H1 (cell line): ENCODE measurements at regions of chr19 and their contacts with region 1.

Region 1: DNA sequence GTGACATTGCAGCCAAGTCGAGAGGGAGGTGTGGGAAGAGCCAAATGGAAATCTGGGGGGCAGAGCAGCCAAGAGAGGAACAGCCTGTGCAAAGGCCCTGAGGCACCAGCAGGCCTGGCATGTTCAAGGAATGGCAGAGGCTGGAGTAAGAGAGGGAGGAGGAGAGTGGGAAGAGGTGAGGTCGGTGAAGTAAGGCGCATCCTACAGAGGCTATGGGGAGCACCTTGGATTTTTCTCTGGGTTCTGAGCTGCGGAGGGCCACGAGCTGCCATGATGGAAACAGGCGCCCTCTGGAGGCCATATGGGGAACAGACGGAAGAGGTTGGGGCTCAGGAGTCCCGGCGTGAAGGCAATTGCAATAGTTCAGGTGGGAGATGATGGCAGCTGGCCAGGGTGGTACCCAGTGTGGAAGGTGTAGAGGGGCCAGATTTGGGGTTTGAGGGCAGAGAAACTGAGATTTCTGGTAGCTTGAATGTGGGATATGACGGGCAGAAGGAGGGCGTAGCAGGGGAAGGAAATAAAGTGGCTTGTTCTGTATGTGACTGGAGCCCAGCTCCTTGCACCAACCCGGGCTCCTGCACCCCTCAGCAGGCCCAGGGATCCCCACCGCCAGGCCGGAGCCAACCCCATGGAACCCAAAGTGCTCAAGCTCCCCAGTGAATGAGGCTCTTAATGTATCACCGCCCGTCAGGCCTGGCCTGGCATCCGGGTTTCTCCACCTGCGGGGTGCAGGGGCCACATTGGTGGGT is 20.5 kb upstream of the STRN4 start:
- DNase-seq: peak in 1 of 2 experiments; percentile 84
- H3K4me3 ChIP-seq: no peak overlapping the region
- H3K27ac ChIP-seq: no peak overlapping the region
- H3K4me1 ChIP-seq: no peaks in the 10 kb centered on the region
- H3K27me3 ChIP-seq: no peaks in the 10 kb centered on the region
- CTCF ChIP-seq: peak; percentile 83 to 95 (median 91)
- EP300 ChIP-seq: peak in 1 of 2 experiments; percentile 24; a peak in 1 of 3 replicates
- POLR2A ChIP-seq: no peak
- RAD21 ChIP-seq: peak; percentile 51 to 67

Region 2: DNA sequence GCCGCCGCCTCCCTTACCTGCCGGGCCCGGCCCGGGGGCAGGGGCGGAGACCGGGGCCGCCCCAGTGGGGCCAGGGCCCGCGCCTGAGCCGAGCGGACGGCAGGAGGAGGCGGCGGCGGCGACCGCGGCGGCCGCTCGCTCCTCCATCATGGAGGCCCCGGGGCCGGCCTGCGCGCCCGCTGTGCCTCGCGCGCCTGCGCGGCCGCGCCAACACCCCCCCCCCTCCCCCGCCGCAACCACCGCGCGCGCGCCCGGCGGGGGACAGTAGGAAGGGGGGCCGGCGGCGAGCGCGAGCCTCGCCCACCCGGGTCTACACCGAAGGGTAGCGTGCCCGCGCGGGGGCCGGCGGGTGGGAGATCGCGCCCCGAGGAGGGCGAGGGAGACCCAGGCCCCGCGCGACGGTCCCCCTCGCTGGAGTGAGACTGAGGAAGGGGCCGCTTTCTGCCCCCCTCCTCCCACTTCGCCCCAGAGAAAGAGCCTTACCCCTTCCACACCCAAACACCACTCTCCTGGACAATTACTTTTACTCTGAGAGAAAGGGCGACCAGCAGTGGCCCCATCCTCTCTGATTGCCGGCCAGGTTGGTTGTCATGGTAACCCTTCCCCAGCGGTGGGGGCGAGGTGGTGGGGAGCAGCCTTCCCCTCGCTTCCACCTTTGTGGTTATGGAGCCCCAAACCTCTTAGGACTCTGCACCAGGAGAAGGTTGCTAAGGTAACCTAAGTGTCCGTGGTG is 20.3 kb before region 1 on chr19 and contains the start of gene STRN4:
- CTCF ChIA-PET with region 1: interaction called, 176 read pairs
- POLR2A ChIA-PET with region 1: interaction called, 6 read pairs
- DNase-seq: peak in 1 of 2 experiments; percentile 67
- H3K4me3 ChIP-seq: peak within 1 kb of the TSS; percentile 84 to 97 (median 93)
- H3K27ac ChIP-seq: peak within 1 kb of the TSS; percentile 85
- H3K4me1 ChIP-seq: peaks cover 0 to 8% (median 2%) of the 10 kb centered on the region in 4 experiments; a peak in 6 of 7 replicates
- H3K27me3 ChIP-seq: no peaks in the 10 kb centered on the region
- CTCF ChIP-seq: no peak
- EP300 ChIP-seq: no peak
- POLR2A ChIP-seq: no peak; a peak in 1 of 3 replicates
- RAD21 ChIP-seq: no peak
- total RNA-seq, gene STRN4: 120 and 124 TPM in 2 replicates

Region 3: GRCh38 chr19:46776927-46777911 is 10.5 kb after region 1 on chr19:
- CTCF ChIA-PET with region 1: interaction called, 22 read pairs
- POLR2A ChIA-PET with region 1: interaction called, 333 read pairs
- DNase-seq: peak; percentile 60 to 79
- H3K4me3 ChIP-seq: no peak overlapping the region
- H3K27ac ChIP-seq: no peak overlapping the region
- H3K4me1 ChIP-seq: peaks cover 0 to 1% (median 0%) of the 10 kb centered on the region in 4 experiments; a peak in 1 of 7 replicates
- H3K27me3 ChIP-seq: no peaks in the 10 kb centered on the region
- CTCF ChIP-seq: no peak
- EP300 ChIP-seq: no peak
- POLR2A ChIP-seq: no peak
- RAD21 ChIP-seq: no peak

Region 4: DNA sequence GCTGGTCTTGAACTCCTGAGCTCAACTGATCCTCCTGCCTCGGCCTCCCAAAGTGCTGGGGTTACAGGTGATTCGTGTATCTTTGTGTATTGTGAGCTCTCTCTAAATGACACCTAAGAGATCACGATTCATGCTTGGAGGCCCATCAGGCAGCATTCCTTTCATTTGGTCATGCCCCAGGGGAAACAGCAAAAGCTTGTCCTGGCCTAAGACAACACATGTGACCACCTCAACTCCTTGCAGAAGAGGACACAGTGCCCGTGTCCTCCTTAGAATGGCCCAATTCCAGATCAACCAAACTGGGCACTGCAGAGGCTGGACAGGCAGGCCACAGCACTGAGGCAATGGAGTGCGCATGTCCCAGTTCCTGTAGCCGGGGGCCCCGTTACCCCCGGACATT is 314.4 kb after region 1 on chr19:
- CTCF ChIA-PET with region 1: no interaction called
- POLR2A ChIA-PET with region 1: no interaction called
- DNase-seq: no peak
- H3K4me3 ChIP-seq: no peak overlapping the region
- H3K27ac ChIP-seq: no peak overlapping the region
- H3K4me1 ChIP-seq: no peaks in the 10 kb centered on the region
- H3K27me3 ChIP-seq: no peaks in the 10 kb centered on the region
- CTCF ChIP-seq: no peak
- EP300 ChIP-seq: no peak
- POLR2A ChIP-seq: no peak
- RAD21 ChIP-seq: no peak